GM12878 (cell line): ENCODE measurements at regions of chr14 and their contacts with region 1.

Region 1: GRCh38 chr14:56491299-56492285 is 88.0 kb upstream of the TMEM260 start:
- DNase-seq: peak; percentile 11
- ATAC-seq: peak; percentile 83
- H3K4me3 ChIP-seq: no peak overlapping the region
- H3K27ac ChIP-seq: no peak overlapping the region
- H3K4me1 ChIP-seq: no peaks in the 10 kb centered on the region
- H3K27me3 ChIP-seq: no peaks in the 10 kb centered on the region
- CTCF ChIP-seq: peak; percentile 57 to 71 (median 65)
- EP300 ChIP-seq: no peak
- POLR2A ChIP-seq: no peak
- RAD21 ChIP-seq: peak; percentile 57

Region 2: GRCh38 chr14:56390859-56391258 is 100.7 kb before region 1 on chr14:
- CTCF ChIA-PET with region 1: no interaction called
- POLR2A ChIA-PET with region 1: no interaction called
- RAD21 ChIA-PET with region 1: no interaction called
- SMC1A ChIA-PET with region 1: no interaction called
- in situ Hi-C with region 1: no loop called
- intact Hi-C with region 1: no loop called
- DNase-seq: no peak
- ATAC-seq: no peak
- H3K4me3 ChIP-seq: no peak overlapping the region
- H3K27ac ChIP-seq: no peak overlapping the region
- H3K4me1 ChIP-seq: no peaks in the 10 kb centered on the region
- H3K27me3 ChIP-seq: no peaks in the 10 kb centered on the region
- CTCF ChIP-seq: no peak
- EP300 ChIP-seq: no peak
- POLR2A ChIP-seq: no peak
- RAD21 ChIP-seq: no peak

Region 3: GRCh38 chr14:56874375-56874774 is 382.8 kb after region 1 on chr14:
- CTCF ChIA-PET with region 1: interaction called, 4 read pairs
- POLR2A ChIA-PET with region 1: no interaction called
- RAD21 ChIA-PET with region 1: no interaction called
- SMC1A ChIA-PET with region 1: no interaction called
- in situ Hi-C with region 1: no loop called
- intact Hi-C with region 1: loop called (anchors 5 kb)
- DNase-seq: no peak
- ATAC-seq: peak; percentile 76
- H3K4me3 ChIP-seq: no peak overlapping the region
- H3K27ac ChIP-seq: no peak overlapping the region
- H3K4me1 ChIP-seq: no peaks in the 10 kb centered on the region
- H3K27me3 ChIP-seq: no peaks in the 10 kb centered on the region
- CTCF ChIP-seq: peak; percentile 43 to 61 (median 45); a peak in 5 of 6 replicates
- EP300 ChIP-seq: no peak
- POLR2A ChIP-seq: no peak
- RAD21 ChIP-seq: peak; percentile 29; the same call in 1 of the 2 replicates

Region 4: DNA sequence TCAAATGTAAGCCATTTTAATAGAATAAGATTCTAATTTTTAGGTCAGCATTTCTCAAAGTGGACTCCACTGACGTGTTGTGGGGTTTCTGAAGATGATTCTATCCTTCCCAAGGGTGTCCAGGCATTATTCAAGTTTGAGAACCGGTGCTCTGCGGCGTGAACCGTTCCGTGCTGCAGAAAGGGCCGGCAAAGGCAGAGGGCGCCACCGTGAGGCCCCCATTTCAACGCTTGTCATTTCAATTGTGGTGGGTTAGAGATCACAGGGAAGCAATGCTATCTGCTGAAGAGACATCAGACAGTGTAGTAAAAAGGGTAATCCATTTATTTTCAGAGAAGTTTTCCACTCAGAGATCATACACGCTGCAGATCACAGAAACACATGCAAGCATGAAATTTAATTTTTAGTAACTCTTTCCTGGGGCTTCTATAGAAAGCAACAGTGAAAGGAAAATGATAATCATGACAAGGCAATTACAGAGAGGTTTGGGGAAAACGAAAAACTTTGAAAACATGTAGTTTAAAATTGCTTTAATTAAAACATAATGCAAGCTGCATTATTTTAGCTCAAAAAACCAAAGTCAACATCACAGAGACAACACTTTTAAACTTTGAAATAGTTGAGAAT is 575.4 kb after region 1 on chr14:
- CTCF ChIA-PET with region 1: interaction called, 5 read pairs
- POLR2A ChIA-PET with region 1: no interaction called
- RAD21 ChIA-PET with region 1: no interaction called
- SMC1A ChIA-PET with region 1: no interaction called
- in situ Hi-C with region 1: loop called (anchors 10 kb)
- intact Hi-C with region 1: loop called (anchors 2 kb)
- DNase-seq: no peak
- ATAC-seq: peak; percentile 89
- H3K4me3 ChIP-seq: no peak overlapping the region
- H3K27ac ChIP-seq: no peak overlapping the region
- H3K4me1 ChIP-seq: no peaks in the 10 kb centered on the region
- H3K27me3 ChIP-seq: peaks cover 0 to 7% of the 10 kb centered on the region in 2 experiments; a peak in 1 of 4 replicates
- CTCF ChIP-seq: peak; percentile 67 to 77 (median 69)
- EP300 ChIP-seq: no peak
- POLR2A ChIP-seq: no peak
- RAD21 ChIP-seq: peak; percentile 79

Region 5: DNA sequence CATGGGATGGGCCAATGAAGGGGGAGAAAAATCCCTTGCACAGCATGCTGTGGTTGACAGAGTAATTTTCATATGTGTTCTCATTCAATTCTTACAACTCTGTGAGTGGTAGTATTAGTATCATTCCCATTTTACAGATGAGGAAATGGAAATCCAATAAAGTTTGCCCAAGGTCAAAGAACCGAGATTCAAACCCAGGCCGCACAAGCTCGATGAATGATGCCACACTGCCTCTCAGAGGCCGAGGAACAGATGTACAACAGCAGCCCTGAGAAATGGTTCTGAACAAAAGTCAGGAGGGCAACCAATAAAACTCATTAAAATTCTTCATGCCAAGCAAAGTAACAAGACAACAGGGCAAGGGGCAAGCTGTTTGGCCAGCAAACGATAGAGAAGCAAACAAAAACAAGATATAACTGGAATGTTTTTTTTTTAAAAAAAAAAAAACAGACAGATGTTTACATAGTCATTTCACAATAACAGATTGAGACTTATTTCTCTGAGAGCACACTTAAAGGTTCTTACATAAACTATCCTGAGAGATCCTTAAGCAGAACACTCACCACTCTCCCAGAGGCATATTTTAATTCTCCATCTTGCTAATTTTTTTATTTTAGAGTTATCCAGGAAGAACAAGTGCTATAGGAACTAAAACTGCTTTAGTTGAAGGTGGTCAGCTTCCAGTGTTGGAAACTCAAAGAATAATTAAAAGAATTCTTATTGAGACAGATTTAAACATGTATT is 691.3 kb after region 1 on chr14:
- CTCF ChIA-PET with region 1: interaction called, 15 read pairs
- POLR2A ChIA-PET with region 1: no interaction called
- RAD21 ChIA-PET with region 1: interaction called, 10 read pairs
- SMC1A ChIA-PET with region 1: interaction called, 7 read pairs
- in situ Hi-C with region 1: loop called (anchors 5 kb)
- intact Hi-C with region 1: loop called (anchors 2 kb)
- DNase-seq: no peak
- ATAC-seq: peak; percentile 54; the same call in 2 of the 3 replicates
- H3K4me3 ChIP-seq: no peak overlapping the region
- H3K27ac ChIP-seq: no peak overlapping the region
- H3K4me1 ChIP-seq: no peaks in the 10 kb centered on the region
- H3K27me3 ChIP-seq: no peaks in the 10 kb centered on the region; a peak in 1 of 4 replicates
- CTCF ChIP-seq: peak; percentile 43 to 45 (median 44); a peak in 5 of 6 replicates
- EP300 ChIP-seq: no peak
- POLR2A ChIP-seq: no peak
- RAD21 ChIP-seq: peak; percentile 69

Region 6: GRCh38 chr14:57199921-57200320 is 708.3 kb after region 1 on chr14:
- CTCF ChIA-PET with region 1: interaction called, 3 read pairs
- POLR2A ChIA-PET with region 1: interaction called, 10 read pairs
- RAD21 ChIA-PET with region 1: interaction called, 3 read pairs
- SMC1A ChIA-PET with region 1: no interaction called
- in situ Hi-C with region 1: no loop called
- intact Hi-C with region 1: no loop called
- DNase-seq: no peak
- ATAC-seq: no peak
- H3K4me3 ChIP-seq: no peak overlapping the region
- H3K27ac ChIP-seq: no peak overlapping the region
- H3K4me1 ChIP-seq: no peaks in the 10 kb centered on the region
- H3K27me3 ChIP-seq: no peaks in the 10 kb centered on the region
- CTCF ChIP-seq: no peak
- EP300 ChIP-seq: no peak
- POLR2A ChIP-seq: no peak
- RAD21 ChIP-seq: no peak

Region 7: GRCh38 chr14:57293866-57294837 is 802.6 kb after region 1 on chr14:
- CTCF ChIA-PET with region 1: interaction called, 11 read pairs
- POLR2A ChIA-PET with region 1: no interaction called
- RAD21 ChIA-PET with region 1: no interaction called
- SMC1A ChIA-PET with region 1: interaction called, 3 read pairs
- in situ Hi-C with region 1: no loop called
- intact Hi-C with region 1: no loop called
- DNase-seq: no peak
- ATAC-seq: no peak
- H3K4me3 ChIP-seq: no peak overlapping the region
- H3K27ac ChIP-seq: no peak overlapping the region
- H3K4me1 ChIP-seq: no peaks in the 10 kb centered on the region
- H3K27me3 ChIP-seq: no peaks in the 10 kb centered on the region
- CTCF ChIP-seq: no peak; a peak in 2 of 6 replicates
- EP300 ChIP-seq: no peak
- POLR2A ChIP-seq: no peak
- RAD21 ChIP-seq: no peak

Region 8: DNA sequence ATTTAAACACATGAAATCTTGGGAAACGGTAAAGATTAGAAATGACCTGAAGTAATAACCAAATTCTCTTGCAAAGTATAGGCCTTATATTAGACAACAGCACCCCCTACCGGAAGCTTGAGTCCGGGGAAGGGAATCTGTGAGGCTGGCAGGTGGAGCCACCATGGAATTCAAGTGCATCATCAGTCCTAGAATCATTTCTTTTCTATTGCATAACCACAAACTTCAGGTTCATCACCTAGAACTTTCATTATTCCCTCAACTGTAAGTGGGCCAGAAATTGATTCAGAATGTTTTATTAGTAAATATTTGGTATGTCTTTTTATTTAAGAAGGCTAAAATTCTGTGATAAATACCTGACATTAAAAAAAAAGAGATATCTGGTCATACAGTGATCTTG is 825.7 kb after region 1 on chr14:
- CTCF ChIA-PET with region 1: interaction called, 46 read pairs
- POLR2A ChIA-PET with region 1: no interaction called
- RAD21 ChIA-PET with region 1: interaction called, 7 read pairs
- SMC1A ChIA-PET with region 1: interaction called, 6 read pairs
- in situ Hi-C with region 1: loop called (anchors 5 kb)
- intact Hi-C with region 1: loop called (anchors 1 kb)
- DNase-seq: peak; percentile 16
- ATAC-seq: peak; percentile 87
- H3K4me3 ChIP-seq: no peak overlapping the region
- H3K27ac ChIP-seq: no peak overlapping the region
- H3K4me1 ChIP-seq: no peaks in the 10 kb centered on the region
- H3K27me3 ChIP-seq: no peaks in the 10 kb centered on the region; a peak in 3 of 4 replicates
- CTCF ChIP-seq: peak; percentile 70 to 90 (median 86)
- EP300 ChIP-seq: no peak
- POLR2A ChIP-seq: no peak
- RAD21 ChIP-seq: peak; percentile 91